CD4-positive, alpha-beta memory T cell (primary cell): ENCODE measurements at regions of chr10 and their contacts with region 1.

Region 1: GRCh38 chr10:122515588-122516231 is 44.8 kb upstream of the DMBT1 start:
- DNase-seq: peak; percentile 73 to 80 (median 79)
- H3K4me3 ChIP-seq: no peak overlapping the region
- H3K4me3 Mint-ChIP-seq: peak overlapping the region in 7 of 8 donors; percentile 52 to 83 (median 70)
- H3K27ac ChIP-seq: no peak overlapping the region
- H3K27ac Mint-ChIP-seq: peak overlapping the region; percentile 19 to 87 (median 54)
- H3K4me1 ChIP-seq: peaks cover 44% of the 10 kb centered on the region
- H3K4me1 Mint-ChIP-seq: peaks cover 31 to 58% (median 45%) of the 10 kb centered on the region in 4 donors
- H3K27me3 ChIP-seq: no peaks in the 10 kb centered on the region
- H3K27me3 Mint-ChIP-seq: no peaks in the 10 kb centered on the region

Region 2: GRCh38 chr10:122461367-122461728 is 54.4 kb before region 1 on chr10 and contains the start of gene HTRA1:
- CTCF ChIA-PET with region 1: no interaction called
- POLR2A ChIA-PET with region 1: no interaction called
- intact Hi-C with region 1: loop called (anchors 5 kb)
- DNase-seq: no peak
- H3K4me3 ChIP-seq: peak within 1 kb of the TSS; percentile 22 to 41
- H3K4me3 Mint-ChIP-seq: peak within 1 kb of the TSS; percentile 82 to 89 (median 87)
- H3K27ac ChIP-seq: no peak within 1 kb of the TSS
- H3K27ac Mint-ChIP-seq: peak within 1 kb of the TSS in 1 of 7 donors; percentile 73
- H3K4me1 ChIP-seq: peaks cover 25% of the 10 kb centered on the region
- H3K4me1 Mint-ChIP-seq: peaks cover 10 to 35% (median 20%) of the 10 kb centered on the region in 4 donors
- H3K27me3 ChIP-seq: peaks cover 28% of the 10 kb centered on the region
- H3K27me3 Mint-ChIP-seq: peaks cover 27 to 37% of the 10 kb centered on the region in 2 donors
- total RNA-seq, gene HTRA1: 0.17 TPM in 1 of 2 experiments, not detected in the other

Region 3: DNA sequence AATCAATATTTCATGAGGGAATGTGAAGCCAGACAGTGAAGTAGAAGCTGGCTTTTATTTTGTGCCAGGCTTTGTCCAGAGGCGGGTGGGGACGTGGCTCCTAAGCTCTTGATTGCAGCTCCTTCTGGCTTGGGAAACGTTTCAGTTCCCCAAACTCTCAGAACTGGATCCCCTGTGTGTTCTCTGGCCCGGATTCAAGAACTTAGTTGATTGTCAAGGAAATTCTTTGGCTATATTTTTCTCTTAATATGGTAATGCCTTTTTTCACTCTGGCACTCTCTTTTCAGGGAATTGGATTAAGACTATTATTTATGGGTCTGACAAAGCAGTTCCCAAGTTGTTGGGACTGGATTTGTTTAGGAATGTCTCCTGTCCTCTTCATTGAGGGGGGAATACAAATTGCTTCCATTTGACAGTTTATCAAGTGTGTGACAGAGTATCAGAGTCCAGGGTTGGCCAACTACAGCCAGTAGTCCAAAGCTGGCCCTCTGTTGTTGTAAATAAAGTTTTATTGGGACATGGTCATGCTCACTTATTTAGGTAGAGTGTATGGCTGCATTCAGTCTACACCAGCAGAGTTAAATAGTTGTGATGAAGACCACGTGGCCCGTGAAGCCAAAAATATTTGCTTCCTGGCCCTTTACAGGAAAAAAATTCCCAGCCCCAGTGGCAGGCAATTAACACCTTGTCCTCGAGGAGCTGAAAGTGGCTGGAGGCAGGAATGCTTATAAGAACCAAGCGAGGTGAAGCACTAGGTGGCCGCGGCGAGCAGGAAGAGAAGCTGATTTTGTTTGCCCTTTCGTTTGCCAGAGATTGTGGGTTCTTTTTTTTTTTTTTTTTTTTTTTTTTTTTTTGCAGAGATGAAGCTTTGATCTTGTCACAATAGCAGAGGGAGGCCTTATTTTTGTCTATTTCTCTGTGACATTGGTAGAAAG is 20.0 kb before region 1 on chr10:
- CTCF ChIA-PET with region 1: interaction called, 14 read pairs
- POLR2A ChIA-PET with region 1: interaction called, 17 read pairs
- intact Hi-C with region 1: loop called (anchors 2 kb)
- DNase-seq: peak in 4 of 5 donors; percentile 28 to 44 (median 34)
- H3K4me3 ChIP-seq: no peak overlapping the region
- H3K4me3 Mint-ChIP-seq: peak overlapping the region in 7 of 8 donors; percentile 36 to 90 (median 62)
- H3K27ac ChIP-seq: no peak overlapping the region
- H3K27ac Mint-ChIP-seq: peak overlapping the region in 6 of 7 donors; percentile 15 to 89 (median 63)
- H3K4me1 ChIP-seq: peaks cover 36% of the 10 kb centered on the region
- H3K4me1 Mint-ChIP-seq: peaks cover 23 to 56% (median 41%) of the 10 kb centered on the region in 4 donors
- H3K27me3 ChIP-seq: no peaks in the 10 kb centered on the region
- H3K27me3 Mint-ChIP-seq: no peaks in the 10 kb centered on the region

Region 4: DNA sequence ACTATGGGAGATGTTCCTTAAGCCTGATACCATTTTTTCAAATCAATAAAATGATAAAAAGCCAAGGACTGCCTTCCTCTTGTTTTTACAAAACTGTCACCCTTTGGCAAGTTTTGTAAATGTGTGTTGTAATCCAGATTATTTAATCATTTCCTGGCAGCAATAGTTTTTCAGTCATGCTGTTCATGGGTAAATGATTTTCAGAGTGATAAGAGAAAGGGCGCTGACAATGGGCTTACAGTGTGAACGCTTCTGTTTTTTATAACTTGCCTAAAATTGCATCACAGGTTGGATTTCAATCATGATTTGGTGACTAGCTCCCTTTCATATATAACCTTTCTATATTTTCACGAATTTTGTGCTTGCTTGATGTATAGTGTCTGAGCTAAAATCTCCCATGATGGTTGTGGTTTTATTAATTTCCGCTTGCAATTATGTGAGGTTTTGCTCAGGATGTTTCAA is 25.9 kb after region 1 on chr10:
- CTCF ChIA-PET with region 1: no interaction called
- POLR2A ChIA-PET with region 1: interaction called, 16 read pairs
- intact Hi-C with region 1: loop called (anchors 2 kb)
- DNase-seq: peak in 4 of 5 donors; percentile 31 to 53 (median 41)
- H3K4me3 ChIP-seq: peak overlapping the region in 1 of 2 donors; percentile 7
- H3K4me3 Mint-ChIP-seq: peak overlapping the region; percentile 24 to 81 (median 64)
- H3K27ac ChIP-seq: peak overlapping the region; percentile 31
- H3K27ac Mint-ChIP-seq: peak overlapping the region; percentile 23 to 80 (median 47)
- H3K4me1 ChIP-seq: peaks cover 53% of the 10 kb centered on the region
- H3K4me1 Mint-ChIP-seq: peaks cover 46 to 57% (median 50%) of the 10 kb centered on the region in 4 donors
- H3K27me3 ChIP-seq: no peaks in the 10 kb centered on the region
- H3K27me3 Mint-ChIP-seq: no peaks in the 10 kb centered on the region

Region 5: DNA sequence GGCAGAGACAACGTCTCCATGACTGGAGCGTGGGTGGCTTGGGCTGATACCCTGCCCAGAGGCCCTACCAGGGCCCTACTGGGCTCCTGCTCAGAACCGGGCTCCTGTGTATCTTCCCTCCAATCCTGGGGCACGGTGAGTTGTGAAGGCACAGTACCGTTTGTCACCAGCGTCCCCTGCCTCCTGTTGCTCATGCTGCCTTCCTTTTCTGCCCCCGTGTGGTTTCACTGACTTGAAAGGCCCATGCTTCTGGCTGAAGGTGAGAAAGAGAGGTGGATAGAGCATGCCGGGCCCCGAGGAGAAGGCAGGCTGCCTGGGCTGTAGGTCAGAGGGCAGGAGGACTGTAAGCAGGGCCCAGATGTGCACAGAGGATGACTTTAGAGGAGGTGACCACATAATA is 35.7 kb after region 1 on chr10:
- CTCF ChIA-PET with region 1: interaction called, 3 read pairs
- POLR2A ChIA-PET with region 1: interaction called, 5 read pairs
- intact Hi-C with region 1: loop called (anchors 5 kb)
- DNase-seq: peak; percentile 38 to 49 (median 41)
- H3K4me3 ChIP-seq: no peak overlapping the region
- H3K4me3 Mint-ChIP-seq: peak overlapping the region in 7 of 8 donors; percentile 24 to 78 (median 61)
- H3K27ac ChIP-seq: no peak overlapping the region
- H3K27ac Mint-ChIP-seq: peak overlapping the region; percentile 69 to 90 (median 87)
- H3K4me1 ChIP-seq: peaks cover 24% of the 10 kb centered on the region
- H3K4me1 Mint-ChIP-seq: peaks cover 21 to 42% (median 27%) of the 10 kb centered on the region in 4 donors
- H3K27me3 ChIP-seq: no peaks in the 10 kb centered on the region
- H3K27me3 Mint-ChIP-seq: no peaks in the 10 kb centered on the region